K562 (cell line): ENCODE measurements at regions of chr7 and their contacts with region 1.

Region 1: DNA sequence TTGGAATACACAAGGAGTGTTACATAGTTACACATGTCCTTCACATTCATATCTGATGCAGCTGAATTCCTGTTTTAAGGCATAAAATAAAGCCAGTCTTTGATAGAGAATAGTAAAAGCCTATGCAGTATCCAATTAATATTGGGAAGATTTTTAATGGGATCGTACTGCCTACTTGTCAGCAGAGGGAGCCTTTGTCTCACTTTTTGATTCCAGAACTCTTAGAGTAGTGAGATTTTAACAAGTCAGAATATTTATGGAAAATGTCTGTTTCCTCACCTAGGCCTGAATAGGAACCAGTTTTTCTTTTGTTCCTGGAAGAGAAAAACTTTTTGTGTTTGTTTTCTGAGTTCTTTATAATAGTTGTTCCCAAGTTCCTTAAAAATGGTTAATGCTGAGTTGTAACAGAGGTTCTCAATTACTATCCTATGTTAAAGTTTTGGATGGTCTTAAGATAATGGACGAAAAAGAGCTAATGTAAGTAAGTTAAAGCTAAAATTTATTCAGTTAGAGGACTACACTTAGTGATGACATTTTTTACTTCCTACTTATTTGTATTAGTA is 114.0 kb downstream of the BBS9 start:
- DNase-seq: peak; percentile 12 to 53 (median 32)
- ATAC-seq: peak; percentile 84
- H3K4me3 ChIP-seq: no peak overlapping the region
- H3K27ac ChIP-seq: no peak overlapping the region
- H3K4me1 ChIP-seq: no peaks in the 10 kb centered on the region
- H3K27me3 ChIP-seq: no peaks in the 10 kb centered on the region
- CTCF ChIP-seq: peak in 2 of 3 experiments; percentile 53 to 79; a peak in 4 of 6 replicates
- EP300 ChIP-seq: no peak
- POLR2A ChIP-seq: no peak
- RAD21 ChIP-seq: peak; percentile 66 to 81

Region 2: DNA sequence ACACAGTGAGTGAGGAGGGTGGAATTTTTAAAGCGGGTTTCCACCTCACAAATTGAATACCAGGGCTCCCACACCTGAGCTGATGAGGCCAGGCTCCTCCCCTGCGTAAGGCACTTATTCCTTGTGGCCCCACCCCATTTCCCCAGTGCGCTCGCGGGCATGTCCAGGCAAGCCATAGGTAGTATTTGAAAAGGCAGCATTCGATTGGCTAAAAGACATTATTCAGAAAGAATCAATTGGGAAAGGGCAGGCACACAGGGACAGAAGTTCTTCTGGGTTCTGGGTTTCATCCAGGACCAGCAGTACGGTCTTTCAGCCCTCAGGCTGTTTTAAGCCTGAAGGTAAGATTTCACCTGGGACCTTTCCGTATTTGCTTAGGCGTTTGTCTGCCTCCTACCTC is 108.3 kb after region 1 on chr7:
- CTCF ChIA-PET with region 1: no interaction called
- POLR2A ChIA-PET with region 1: no interaction called
- in situ Hi-C with region 1: no loop called
- intact Hi-C with region 1: no loop called
- DNase-seq: no peak
- ATAC-seq: no peak
- H3K4me3 ChIP-seq: no peak overlapping the region
- H3K27ac ChIP-seq: no peak overlapping the region
- H3K4me1 ChIP-seq: no peaks in the 10 kb centered on the region
- H3K27me3 ChIP-seq: no peaks in the 10 kb centered on the region
- CTCF ChIP-seq: no peak
- EP300 ChIP-seq: no peak
- POLR2A ChIP-seq: no peak
- RAD21 ChIP-seq: no peak

Region 3: DNA sequence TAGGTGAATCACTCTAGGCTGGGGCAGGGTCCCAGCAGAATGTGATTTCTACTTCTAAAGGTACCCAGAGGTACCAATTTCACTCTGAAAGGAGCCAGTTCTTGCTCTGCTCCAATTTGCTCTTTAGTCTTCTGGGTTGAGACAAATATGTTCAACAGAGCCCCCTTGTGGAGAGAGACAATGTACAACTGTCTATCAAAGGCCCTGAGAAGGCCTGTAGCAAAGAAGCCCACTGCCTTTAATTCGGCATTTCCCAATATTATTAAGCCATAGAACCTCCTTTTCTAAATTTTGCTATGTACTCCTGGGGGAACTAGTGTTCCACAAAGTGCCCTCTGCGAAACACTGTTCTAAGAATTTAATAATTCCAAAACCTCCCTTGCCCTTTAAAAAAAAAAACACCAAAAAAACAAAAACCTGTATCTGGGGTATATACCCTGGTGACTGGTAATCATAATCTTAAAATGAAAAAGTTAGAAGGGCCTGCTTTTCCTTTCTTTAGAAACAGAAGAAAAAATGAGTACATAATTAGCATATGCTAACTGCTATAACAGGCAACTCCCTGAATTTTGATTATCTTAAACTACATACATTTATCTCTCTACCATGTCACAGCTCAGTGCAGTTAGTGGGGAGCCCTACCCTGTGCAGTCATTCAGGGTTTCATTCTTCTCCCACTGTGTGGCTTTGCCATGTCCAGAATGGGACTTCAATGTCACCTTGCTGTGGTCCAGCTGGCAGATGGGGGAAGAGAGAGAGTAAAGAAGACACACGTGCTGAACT is 501.1 kb after region 1 on chr7:
- CTCF ChIA-PET with region 1: no interaction called
- POLR2A ChIA-PET with region 1: no interaction called
- in situ Hi-C with region 1: no loop called
- intact Hi-C with region 1: loop called (anchors 5 kb)
- DNase-seq: peak; percentile 24 to 56 (median 44)
- ATAC-seq: peak; percentile 73; the same call in 2 of the 3 replicates
- H3K4me3 ChIP-seq: no peak overlapping the region
- H3K27ac ChIP-seq: no peak overlapping the region
- H3K4me1 ChIP-seq: no peaks in the 10 kb centered on the region
- H3K27me3 ChIP-seq: no peaks in the 10 kb centered on the region
- CTCF ChIP-seq: peak in 2 of 3 experiments; percentile 26 to 47; a peak in 2 of 6 replicates
- EP300 ChIP-seq: no peak
- POLR2A ChIP-seq: no peak
- RAD21 ChIP-seq: no peak

Region 4: DNA sequence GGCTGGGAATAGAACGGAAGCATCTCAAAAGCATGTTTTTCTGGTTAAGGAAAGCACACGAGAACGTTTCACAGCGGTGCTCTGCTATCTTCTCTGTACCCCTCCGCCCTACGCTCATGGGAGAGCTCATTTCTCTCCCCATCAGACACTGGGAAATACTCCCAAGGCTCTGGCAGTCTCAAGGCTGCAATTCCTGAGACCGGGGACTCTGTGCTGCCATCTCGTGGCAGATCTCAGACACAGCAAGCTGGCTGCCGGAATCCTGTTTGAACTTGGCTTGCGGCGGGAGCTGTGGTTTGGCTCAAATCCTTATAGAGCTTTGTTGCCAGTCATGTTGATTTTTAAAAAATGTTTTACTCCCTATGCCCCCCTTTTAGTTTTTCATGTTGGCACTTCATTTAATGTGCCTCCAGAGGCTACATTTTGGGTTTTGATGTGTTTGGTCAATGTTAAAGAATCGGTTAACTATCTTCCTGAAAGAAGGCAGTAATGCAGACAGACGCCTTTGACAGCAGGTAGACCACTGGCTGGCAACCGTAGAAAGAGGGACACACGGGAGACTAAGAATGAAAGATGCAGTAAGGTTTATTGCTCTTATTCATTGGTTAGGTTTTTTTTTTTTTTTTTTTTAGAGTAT is 689.5 kb after region 1 on chr7:
- CTCF ChIA-PET with region 1: interaction called, 4 read pairs
- POLR2A ChIA-PET with region 1: no interaction called
- in situ Hi-C with region 1: loop called (anchors 10 kb)
- intact Hi-C with region 1: loop called (anchors 5 kb)
- DNase-seq: peak; percentile 63 to 73 (median 71)
- ATAC-seq: peak; percentile 92
- H3K4me3 ChIP-seq: no peak overlapping the region
- H3K27ac ChIP-seq: no peak overlapping the region
- H3K4me1 ChIP-seq: no peaks in the 10 kb centered on the region
- H3K27me3 ChIP-seq: no peaks in the 10 kb centered on the region
- CTCF ChIP-seq: peak; percentile 78 to 93 (median 82)
- EP300 ChIP-seq: no peak
- POLR2A ChIP-seq: no peak
- RAD21 ChIP-seq: peak; percentile 63 to 69